Activated CD8-positive, alpha-beta T cell treated with anti-CD3 and anti-CD28 coated beads for 36 hours (primary cell): ENCODE measurements at regions of chr21 and their contacts with region 1.

Region 1: DNA sequence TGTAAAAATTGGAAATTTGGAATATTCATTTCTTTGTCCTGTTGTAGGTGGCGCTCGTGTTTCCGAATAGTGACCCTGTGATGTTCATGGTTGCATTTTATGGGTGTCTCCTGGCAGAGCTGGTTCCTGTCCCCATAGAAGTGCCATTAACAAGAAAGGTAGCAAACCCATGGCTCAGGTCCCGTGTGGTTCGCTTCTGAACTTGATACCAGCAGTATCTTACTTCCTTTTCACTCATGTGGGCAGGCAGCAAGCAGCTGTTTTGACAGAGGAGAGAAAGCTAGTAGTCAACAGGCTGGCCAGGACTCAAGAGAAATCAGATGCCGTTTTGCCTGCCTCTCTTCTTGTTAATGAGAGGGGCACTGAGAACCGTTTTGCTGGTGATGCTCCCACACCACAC is 72.8 kb downstream of the S100B start:
- DNase-seq: peak; percentile 24
- ATAC-seq: peak; percentile 39
- H3K4me3 Mint-ChIP-seq: no peak overlapping the region
- H3K27ac Mint-ChIP-seq: peak overlapping the region; percentile 71
- H3K4me1 Mint-ChIP-seq: peaks cover 27% of the 10 kb centered on the region
- H3K27me3 Mint-ChIP-seq: no peaks in the 10 kb centered on the region
- CTCF ChIP-seq: no peak

Region 2: GRCh38 chr21:46517361-46517760 is 14.7 kb before region 1 on chr21:
- CTCF ChIA-PET with region 1: interaction called, 11 read pairs
- POLR2A ChIA-PET with region 1: no interaction called
- intact Hi-C with region 1: no loop called
- DNase-seq: no peak
- ATAC-seq: no peak
- H3K4me3 Mint-ChIP-seq: no peak overlapping the region
- H3K27ac Mint-ChIP-seq: no peak overlapping the region
- H3K4me1 Mint-ChIP-seq: peaks cover 13% of the 10 kb centered on the region
- H3K27me3 Mint-ChIP-seq: no peaks in the 10 kb centered on the region
- CTCF ChIP-seq: no peak